ENCODE measurements at regions of chr10 and their contacts with region 1.

Region 1: DNA sequence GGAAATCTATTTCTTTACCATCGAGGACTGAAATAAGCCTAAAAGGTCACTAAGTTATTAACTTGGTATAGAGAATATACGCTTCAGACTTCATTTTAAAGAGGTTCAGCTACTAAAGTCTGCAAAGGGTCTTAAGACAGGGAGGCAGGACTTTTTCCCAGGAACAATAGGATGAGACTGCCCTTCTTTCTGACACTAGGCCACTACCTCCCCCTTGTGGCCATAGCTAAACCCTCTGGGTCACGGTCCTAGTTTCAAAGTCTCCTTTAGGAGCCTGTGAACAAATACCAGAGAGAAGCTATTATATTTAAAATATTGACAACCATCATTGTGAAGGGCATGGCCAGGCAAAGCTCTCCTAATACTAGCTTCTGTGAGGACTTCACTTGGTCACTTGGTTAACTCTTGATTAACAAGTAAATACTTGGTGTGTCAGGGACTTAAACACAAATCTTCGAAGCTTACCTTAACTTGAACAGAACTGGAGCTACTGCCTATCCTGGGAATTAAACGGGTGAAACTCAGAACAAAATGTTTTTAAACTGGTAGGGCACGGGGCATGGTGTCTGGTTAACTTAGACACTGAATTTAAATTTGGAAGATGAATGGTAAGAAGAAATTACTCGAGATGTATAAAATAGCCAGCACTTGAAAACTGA is 75.6 kb downstream of the CCDC6 start:
- DNase-seq: peak; percentile 55 to 62 (median 59)
- H3K4me3 ChIP-seq: no peak overlapping the region
- H3K27ac ChIP-seq: peak overlapping the region; percentile 94
- H3K4me1 ChIP-seq: peaks cover 40 to 94% (median 66%) of the 10 kb centered on the region in 4 experiments
- H3K27me3 ChIP-seq: no peaks in the 10 kb centered on the region

Region 2: GRCh38 chr10:59741048-59741447 is 89.7 kb before region 1 on chr10:
- CTCF ChIA-PET with region 1: no interaction called
- POLR2A ChIA-PET with region 1: no interaction called
- DNase-seq: no peak
- H3K4me3 ChIP-seq: no peak overlapping the region
- H3K27ac ChIP-seq: no peak overlapping the region
- H3K4me1 ChIP-seq: no peaks in the 10 kb centered on the region
- H3K27me3 ChIP-seq: no peaks in the 10 kb centered on the region

Region 3: DNA sequence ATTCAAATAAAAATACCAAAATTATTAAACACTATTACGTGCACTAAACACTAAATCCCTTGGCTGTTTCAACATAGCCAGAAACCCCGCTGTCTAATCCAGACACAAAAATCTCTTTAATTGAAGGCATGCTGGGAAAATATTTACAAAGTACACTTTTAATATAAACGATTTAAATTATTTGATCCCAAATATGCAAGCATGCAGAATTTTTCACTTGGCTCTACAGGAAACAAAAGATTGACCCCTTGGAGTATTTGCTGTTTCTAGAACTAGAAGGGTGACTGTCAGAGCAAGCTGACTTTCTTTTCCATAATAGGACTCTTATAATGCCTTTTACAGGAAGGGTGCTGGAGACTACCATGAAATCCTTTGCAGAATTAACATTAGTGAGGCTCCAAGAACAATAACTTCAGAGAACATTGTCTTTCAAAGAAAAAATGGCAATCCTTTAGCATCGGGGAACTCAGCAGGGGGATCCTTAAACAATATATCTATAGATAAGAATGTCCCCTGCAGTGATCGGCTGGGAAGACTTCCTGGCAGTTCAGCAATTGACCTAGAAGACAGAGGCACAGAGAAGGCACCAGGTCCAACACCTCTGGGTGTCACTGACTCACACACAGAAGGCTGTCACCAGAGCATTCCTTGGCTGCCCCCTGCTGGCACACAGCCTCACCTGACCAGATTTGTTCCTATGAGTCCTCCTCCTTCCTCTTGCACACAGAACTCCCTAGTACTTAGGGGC is 21.7 kb before region 1 on chr10:
- CTCF ChIA-PET with region 1: interaction called, 22 read pairs
- POLR2A ChIA-PET with region 1: no interaction called
- DNase-seq: peak; percentile 73 to 84 (median 80)
- H3K4me3 ChIP-seq: no peak overlapping the region
- H3K27ac ChIP-seq: peak overlapping the region in 1 of 2 experiments; percentile 30
- H3K4me1 ChIP-seq: peaks cover 9 to 21% (median 13%) of the 10 kb centered on the region in 4 experiments
- H3K27me3 ChIP-seq: no peaks in the 10 kb centered on the region

Region 4: DNA sequence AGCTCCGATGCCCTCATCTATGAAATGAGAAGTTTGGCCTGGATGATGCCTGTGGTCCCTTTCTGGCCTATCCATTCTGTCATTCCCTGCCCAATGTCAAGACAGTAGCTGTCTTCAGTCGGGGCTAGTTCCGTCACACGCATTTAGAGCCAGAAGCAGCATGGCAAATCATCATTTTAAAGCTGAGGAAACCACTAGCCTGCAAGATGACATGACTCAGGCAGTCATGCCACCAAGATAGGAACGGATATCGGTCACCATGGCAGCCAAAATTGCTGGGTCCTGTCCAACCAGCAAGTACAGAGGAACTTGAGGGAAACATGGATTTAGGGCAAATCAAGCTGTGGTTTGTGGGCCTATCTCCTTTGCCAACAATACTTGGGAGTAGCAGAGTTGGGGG is 13.0 kb before region 1 on chr10:
- CTCF ChIA-PET with region 1: interaction called, 57 read pairs
- POLR2A ChIA-PET with region 1: interaction called, 7 read pairs
- DNase-seq: peak; percentile 91 to 97 (median 96)
- H3K4me3 ChIP-seq: peak overlapping the region in 2 of 7 experiments; percentile 14 to 20
- H3K27ac ChIP-seq: peak overlapping the region; percentile 25 to 69
- H3K4me1 ChIP-seq: peaks cover 6 to 53% (median 19%) of the 10 kb centered on the region in 4 experiments
- H3K27me3 ChIP-seq: no peaks in the 10 kb centered on the region

Region 5: DNA sequence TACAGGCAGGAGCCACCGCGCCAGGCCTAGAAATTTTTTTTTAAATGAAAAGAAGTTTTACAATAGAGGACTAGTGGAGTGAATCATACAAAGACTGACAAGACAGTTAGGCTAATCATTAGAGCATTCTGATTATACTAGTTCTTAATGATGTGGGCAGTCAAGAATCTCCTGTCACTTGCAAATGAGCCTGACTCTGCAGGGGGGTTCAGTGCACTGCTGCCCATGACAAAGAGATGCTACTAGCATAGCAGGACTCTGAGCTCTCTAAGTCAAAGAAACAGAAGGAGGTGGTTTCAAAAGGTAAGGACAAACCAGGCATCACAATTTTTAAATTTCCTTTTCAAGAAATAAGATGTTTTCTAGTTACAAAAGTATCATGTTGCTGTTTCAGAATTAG is 16.6 kb after region 1 on chr10:
- CTCF ChIA-PET with region 1: interaction called, 50 read pairs
- POLR2A ChIA-PET with region 1: interaction called, 16 read pairs
- DNase-seq: no peak
- H3K4me3 ChIP-seq: no peak overlapping the region
- H3K27ac ChIP-seq: no peak overlapping the region
- H3K4me1 ChIP-seq: peaks cover 15 to 46% (median 20%) of the 10 kb centered on the region in 4 experiments
- H3K27me3 ChIP-seq: no peaks in the 10 kb centered on the region

Region 6: DNA sequence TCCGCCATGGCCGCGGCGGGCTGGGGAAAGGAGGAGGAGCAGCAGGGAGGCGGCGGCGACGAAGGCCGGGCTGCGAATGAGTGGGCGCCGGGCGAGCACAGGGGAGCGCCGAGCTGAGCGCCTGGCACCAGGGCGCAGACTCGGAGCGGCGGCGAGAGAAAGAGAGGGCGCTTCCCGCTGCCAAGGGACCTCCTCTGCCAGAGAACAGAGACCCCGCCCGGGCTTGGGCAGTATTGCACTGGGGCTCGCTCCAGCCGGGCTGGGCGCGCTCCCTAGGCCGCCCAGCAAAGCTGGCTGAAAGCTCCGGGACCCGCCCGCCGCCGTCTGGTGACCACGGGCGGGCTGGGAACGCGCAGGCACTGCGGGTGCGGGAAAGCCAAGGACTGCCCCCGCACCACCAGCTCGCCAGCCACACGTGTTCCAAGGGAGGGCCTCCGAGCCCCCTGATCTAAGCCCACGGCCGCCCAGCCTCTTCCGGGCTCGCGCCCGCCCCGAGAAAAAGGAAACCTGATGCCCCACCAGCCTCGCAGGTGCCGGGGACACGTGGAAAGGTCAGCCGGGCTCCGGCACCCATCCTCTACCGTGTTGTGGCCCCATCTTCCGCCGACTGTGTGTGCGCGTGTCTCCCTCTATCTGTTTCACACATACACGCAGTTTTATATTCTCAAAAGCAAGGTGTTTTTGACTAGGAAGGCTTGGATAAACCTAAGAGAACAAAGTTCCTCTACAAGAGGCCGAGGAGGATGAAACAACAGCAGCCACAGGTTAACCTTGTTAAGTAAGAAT is 75.9 kb after region 1 on chr10 and contains the start of gene CCDC6:
- CTCF ChIA-PET with region 1: interaction called, 29 read pairs
- POLR2A ChIA-PET with region 1: interaction called, 12 read pairs
- DNase-seq: peak; percentile 95 to 97 (median 95)
- H3K4me3 ChIP-seq: peak within 1 kb of the TSS; percentile 75 to 100 (median 98)
- H3K27ac ChIP-seq: peak within 1 kb of the TSS; percentile 76 to 87
- H3K4me1 ChIP-seq: peaks cover 29 to 48% (median 40%) of the 10 kb centered on the region in 4 experiments
- H3K27me3 ChIP-seq: no peaks in the 10 kb centered on the region

Region 7: DNA sequence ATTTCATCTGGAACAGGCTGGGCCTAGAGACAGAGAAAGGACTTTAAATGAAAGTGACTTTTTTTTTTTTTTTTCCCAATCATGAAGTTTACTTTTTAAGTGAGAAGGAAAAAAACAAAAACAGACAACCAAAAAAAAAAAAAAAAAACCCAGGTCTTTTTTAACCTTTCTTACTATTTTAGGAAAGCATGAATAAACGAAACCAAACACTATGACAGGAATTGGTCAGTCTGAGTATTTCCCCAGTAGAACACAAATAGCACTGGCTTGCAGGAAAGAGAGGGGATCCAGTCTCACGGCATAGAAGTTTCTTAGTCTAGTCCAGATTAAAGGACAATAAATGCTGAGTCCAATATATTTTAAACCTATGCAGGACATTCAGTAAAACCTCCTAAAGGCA is 256.1 kb after region 1 on chr10:
- CTCF ChIA-PET with region 1: no interaction called
- POLR2A ChIA-PET with region 1: no interaction called
- DNase-seq: no peak
- H3K4me3 ChIP-seq: no peak overlapping the region
- H3K27ac ChIP-seq: no peak overlapping the region
- H3K4me1 ChIP-seq: no peaks in the 10 kb centered on the region
- H3K27me3 ChIP-seq: no peaks in the 10 kb centered on the region

Region 8: GRCh38 chr10:61188691-61189090 is 1358.0 kb after region 1 on chr10:
- CTCF ChIA-PET with region 1: no interaction called
- POLR2A ChIA-PET with region 1: no interaction called
- DNase-seq: peak in 1 of 3 donors; percentile 16
- H3K4me3 ChIP-seq: no peak overlapping the region
- H3K27ac ChIP-seq: no peak overlapping the region
- H3K4me1 ChIP-seq: no peaks in the 10 kb centered on the region
- H3K27me3 ChIP-seq: no peaks in the 10 kb centered on the region